ENCODE measurements at regions of chr6 and their contacts with region 1.

Region 1: DNA sequence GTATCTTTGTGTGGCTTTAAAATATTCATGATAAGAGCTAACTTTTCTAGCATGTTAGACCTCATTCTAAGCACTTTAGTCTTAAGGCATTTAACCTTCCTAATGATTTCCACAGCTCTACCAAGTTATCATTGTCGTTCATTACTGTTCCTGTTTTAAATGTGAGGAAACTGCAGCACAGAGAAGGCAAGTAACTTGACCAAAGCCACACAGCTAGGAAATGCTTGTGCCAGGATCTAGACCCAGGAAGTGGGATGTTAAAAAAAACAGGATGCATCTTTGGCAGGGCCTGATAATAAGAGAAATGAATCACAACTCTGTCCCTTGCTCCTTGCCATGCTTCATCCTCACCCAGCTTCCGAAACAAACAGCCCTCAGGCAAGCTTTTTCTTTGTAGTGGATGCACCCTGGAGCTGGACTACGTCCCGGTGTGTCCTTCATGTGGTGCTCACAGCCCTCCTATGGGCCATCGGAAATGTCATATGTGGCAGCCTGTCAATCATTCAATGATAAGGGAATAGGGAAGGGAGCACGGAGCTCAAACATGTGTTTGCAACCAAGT is 196.9 kb upstream of the RREB1 start:
- DNase-seq: peak; percentile 94
- ATAC-seq: peak; percentile 93
- H3K4me3 ChIP-seq: no peak overlapping the region
- H3K27ac ChIP-seq: peak overlapping the region; percentile 47
- H3K4me1 ChIP-seq: peaks cover 31% of the 10 kb centered on the region
- H3K27me3 ChIP-seq: no peaks in the 10 kb centered on the region
- CTCF ChIP-seq: no peak

Region 2: GRCh38 chr6:6742535-6742934 is 168.3 kb before region 1 on chr6:
- CTCF ChIA-PET with region 1: interaction called, 12 read pairs
- POLR2A ChIA-PET with region 1: no interaction called
- intact Hi-C with region 1: no loop called
- DNase-seq: no peak
- ATAC-seq: no peak
- H3K4me3 ChIP-seq: no peak overlapping the region
- H3K27ac ChIP-seq: no peak overlapping the region
- H3K4me1 ChIP-seq: no peaks in the 10 kb centered on the region
- H3K27me3 ChIP-seq: no peaks in the 10 kb centered on the region
- CTCF ChIP-seq: no peak